ENCODE measurements at regions of chr17 and their contacts with region 1.

Region 1: DNA sequence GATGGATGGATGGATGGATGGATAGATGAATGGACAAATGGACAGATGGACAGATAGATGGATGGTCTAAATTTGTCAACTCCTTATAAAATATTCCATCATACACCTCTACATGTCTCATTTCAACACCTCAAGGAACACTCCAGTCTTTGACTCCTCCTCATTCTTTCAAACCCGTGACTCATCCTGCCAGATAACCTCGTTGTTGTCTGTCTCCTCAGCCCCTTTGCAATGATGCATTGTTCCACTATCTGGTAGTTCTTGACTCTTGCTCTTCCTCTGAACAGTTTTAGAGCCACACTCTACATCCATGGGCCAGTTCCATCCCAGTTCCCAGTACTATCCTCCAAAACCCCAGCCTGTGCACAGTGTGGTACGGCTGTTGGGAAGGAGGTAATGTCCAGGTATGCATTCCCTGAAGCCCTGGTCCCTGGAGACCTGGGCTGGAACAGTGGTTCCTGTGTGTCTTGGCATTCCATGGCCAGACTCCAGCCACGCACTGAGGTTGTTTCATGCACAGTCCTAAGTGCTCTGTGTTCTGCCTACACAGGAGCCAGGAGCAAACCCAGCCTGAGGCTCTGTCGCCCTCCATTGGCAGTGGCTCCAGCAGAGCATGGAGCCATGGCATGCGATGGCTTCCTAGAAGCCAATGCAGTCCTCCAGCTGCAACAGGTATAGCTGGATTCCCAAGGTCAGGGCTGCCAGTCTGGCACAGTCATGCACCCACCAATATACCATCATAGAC is 105.7 kb downstream of the C17orf67 start:
- DNase-seq: no peak
- H3K4me3 ChIP-seq: no peak overlapping the region
- H3K27ac ChIP-seq: no peak overlapping the region
- H3K4me1 ChIP-seq: no peaks in the 10 kb centered on the region
- H3K27me3 ChIP-seq: no peaks in the 10 kb centered on the region
- CTCF ChIP-seq: no peak
- POLR2A ChIP-seq: no peak

Region 2: GRCh38 chr17:55911186-55911585 is 816.9 kb before region 1 on chr17:
- intact Hi-C with region 1: loop called (anchors 10 kb)
- DNase-seq: no peak
- H3K4me3 ChIP-seq: no peak overlapping the region
- H3K27ac ChIP-seq: no peak overlapping the region
- H3K4me1 ChIP-seq: no peaks in the 10 kb centered on the region
- H3K27me3 ChIP-seq: no peaks in the 10 kb centered on the region
- CTCF ChIP-seq: no peak
- POLR2A ChIP-seq: no peak

Region 3: DNA sequence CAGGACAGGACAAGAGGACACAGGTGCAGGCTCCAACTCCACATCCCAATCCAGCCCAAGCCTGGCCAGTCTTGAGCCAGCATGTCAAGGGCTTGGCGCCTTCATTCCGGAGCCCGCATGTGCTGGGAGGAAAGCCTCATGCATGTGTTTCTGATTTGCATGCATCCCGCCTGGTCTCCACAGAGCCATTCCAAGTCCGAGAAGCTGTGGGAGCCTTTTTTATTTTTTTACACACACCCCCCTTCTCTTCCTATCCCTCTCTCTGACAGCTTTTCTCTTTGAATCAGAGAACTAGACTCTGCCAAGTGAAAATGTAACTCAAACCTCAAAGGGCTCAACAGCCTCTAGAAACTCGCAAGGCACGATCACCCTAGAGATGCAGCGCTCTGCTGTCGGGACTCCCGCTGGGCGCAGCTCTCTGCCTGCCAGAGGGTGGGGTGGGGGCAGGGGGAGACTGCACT is 89.4 kb before region 1 on chr17:
- intact Hi-C with region 1: no loop called
- DNase-seq: no peak
- H3K4me3 ChIP-seq: no peak overlapping the region
- H3K27ac ChIP-seq: no peak overlapping the region
- H3K4me1 ChIP-seq: no peaks in the 10 kb centered on the region
- H3K27me3 ChIP-seq: no peaks in the 10 kb centered on the region
- CTCF ChIP-seq: no peak
- POLR2A ChIP-seq: no peak

Measured in thyroid gland (tissue), 4 donors.